ENCODE measurements at regions of chr12 and their contacts with region 1.

Region 1: DNA sequence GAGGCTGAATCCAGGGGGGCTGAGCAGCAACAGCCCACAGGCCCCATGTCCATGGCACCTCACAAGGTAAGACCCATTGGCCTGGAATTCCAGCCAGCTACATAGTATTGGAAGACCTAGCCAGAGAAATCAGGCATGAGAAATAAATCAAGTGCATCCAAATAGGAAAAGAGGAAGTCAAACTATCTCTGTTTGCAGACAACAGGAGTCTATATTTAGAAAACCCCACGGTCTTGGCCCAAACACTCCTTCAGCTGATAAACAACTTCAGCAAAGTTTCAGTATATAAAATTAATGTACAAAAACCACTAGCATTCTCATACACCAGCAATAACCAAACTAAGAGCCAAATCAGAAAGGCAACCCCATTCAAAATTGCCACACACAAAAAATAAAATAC is 16.9 kb downstream of the PDE6H start:
- DNase-seq: peak; percentile 42
- H3K4me3 ChIP-seq: no peak overlapping the region
- H3K27ac ChIP-seq: no peak overlapping the region
- H3K4me1 ChIP-seq: peaks cover 32% of the 10 kb centered on the region
- CTCF ChIP-seq: no peak

Region 2: DNA sequence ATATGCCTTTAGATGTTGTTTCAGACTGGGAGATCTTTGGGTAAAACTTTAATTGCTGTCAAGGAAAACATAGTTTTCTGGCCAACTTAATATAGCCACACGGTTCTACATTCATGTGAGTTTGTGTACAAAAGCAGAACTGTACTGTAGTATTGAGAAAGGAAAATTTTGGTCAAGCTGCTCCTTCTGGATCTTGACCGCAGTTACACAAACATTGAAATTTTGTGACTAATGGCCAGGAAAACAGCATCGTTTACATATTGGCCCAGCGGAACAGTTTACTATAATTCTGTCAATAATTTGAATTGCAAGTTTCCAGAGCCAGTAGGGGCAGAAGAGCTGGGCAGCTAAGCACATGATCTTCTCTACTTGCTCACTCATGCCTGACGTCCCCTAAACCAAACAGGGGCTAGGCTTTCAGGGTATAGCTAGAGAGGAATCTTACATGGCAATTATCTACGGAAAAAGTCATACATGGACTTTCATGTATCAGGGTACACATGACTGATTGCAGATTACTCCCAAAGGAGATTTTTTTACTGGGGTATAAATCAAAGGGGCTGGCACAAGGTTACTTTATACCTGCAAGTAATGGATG is 135.1 kb before region 1 on chr12:
- CTCF ChIA-PET with region 1: no interaction called
- POLR2A ChIA-PET with region 1: interaction called, 13 read pairs
- intact Hi-C with region 1: no loop called
- DNase-seq: peak; percentile 64
- H3K4me3 ChIP-seq: peak overlapping the region; percentile 13
- H3K27ac ChIP-seq: peak overlapping the region; percentile 48
- H3K4me1 ChIP-seq: peaks cover 32% of the 10 kb centered on the region
- CTCF ChIP-seq: peak; percentile 41; the same call in 1 of the 2 replicates

Region 3: DNA sequence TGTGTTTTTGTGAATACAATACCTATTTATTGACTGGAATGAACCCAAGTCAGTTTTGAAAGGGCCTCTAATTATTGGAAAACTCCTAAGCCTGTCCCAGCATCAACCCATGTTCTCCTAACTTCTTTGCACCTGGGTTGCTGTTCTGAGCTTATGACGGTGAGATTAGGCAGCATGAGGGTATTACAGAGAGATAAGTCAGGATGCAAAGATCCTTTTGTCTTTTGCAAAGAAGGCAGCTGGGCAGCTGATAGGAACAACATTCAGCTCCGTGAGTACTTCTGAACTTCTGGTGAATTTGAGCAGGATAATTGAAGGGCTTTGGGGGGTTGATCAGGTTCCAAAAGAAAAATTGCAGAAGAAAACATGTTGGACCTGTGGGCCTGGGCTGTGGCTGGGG is 17.0 kb before region 1 on chr12 and contains the start of gene PDE6H:
- CTCF ChIA-PET with region 1: no interaction called
- POLR2A ChIA-PET with region 1: interaction called, 14 read pairs
- intact Hi-C with region 1: no loop called
- DNase-seq: no peak
- H3K4me3 ChIP-seq: no peak within 1 kb of the TSS
- H3K27ac ChIP-seq: no peak within 1 kb of the TSS
- H3K4me1 ChIP-seq: peaks cover 7% of the 10 kb centered on the region
- CTCF ChIP-seq: no peak
- total RNA-seq, gene PDE6H: not detected in 2 replicates

Region 4: DNA sequence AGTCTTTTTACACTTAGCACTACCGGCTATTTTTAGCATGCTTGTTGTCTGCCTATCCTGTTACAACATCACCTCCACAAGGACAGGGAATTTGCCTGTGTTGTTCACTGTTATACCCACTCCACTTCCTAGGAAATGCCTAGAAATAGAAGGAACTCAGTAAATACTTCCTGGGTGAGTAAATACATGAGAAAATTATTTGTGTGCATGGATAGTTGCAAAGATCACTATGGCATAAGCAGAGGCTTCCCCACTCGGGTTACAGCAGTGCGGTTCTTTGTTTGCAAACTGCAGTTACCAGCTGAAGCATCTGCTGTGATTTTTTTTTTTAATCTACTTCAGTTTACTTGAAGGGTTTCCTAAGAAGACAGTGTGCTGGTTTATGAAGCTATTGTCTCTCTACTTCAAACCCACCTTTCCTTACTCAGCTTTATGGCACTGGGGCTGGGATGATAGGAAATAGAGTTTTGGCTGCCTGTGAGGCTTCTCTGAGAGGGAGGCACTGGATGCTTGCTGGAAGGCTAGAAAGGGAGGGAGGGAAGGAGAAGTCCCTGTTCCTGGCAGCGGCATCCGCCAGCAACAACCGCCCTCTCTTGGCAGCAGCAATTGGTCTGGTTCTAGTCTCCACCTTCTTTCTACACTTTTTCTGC is 12.1 kb after region 1 on chr12:
- CTCF ChIA-PET with region 1: no interaction called
- POLR2A ChIA-PET with region 1: no interaction called
- intact Hi-C with region 1: no loop called
- DNase-seq: no peak
- H3K4me3 ChIP-seq: no peak overlapping the region
- H3K27ac ChIP-seq: no peak overlapping the region
- H3K4me1 ChIP-seq: no peaks in the 10 kb centered on the region
- CTCF ChIP-seq: no peak

Measured in OCI-LY7 (cell line).